GM13977 (cell line): ENCODE measurements at regions of chr6 and their contacts with region 1.

Region 1: DNA sequence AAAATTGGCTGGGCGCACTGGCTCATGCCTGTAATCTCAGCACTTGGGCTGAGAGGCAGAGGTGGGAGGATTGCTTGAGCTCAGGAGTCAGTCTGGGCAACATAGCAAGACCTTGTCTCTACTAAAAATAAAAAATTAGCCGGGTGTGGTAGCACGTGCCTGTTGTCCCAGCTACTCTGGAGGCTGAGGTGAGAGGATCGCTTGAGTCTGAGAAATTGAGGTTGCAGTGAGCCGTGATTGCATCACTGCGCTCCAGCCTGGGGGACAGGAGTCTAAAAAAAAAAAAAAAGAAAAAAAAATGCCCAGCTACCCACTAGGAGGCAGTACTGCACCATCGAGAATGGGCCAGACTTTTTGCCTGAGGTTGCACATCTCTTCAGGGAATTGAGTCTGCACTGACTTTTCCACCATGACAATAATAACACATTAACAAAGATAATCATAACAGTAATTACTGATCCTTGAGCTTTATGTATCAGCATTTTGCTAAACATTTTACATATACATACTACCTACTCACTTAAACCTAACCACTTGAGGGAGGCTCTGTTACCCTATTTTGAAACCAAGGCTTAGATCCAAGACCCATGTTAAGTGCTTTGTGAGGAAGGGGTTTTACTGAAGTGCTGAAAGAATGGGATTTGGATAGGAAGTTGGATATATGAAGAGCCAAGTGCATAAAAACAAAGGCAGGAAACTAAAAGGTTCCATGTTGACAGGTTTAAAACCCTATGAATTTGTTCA is 21.0 kb downstream of the SRSF3 start:
- DNase-seq: peak; percentile 56
- CTCF ChIP-seq: peak; percentile 73

Region 2: GRCh38 chr6:36759148-36759759 is 144.1 kb after region 1 on chr6:
- in situ Hi-C with region 1: loop called (anchors 10 kb)
- DNase-seq: peak; percentile 88
- CTCF ChIP-seq: peak; percentile 99